GM12878 (cell line): ENCODE measurements at regions of chr6 and their contacts with region 1.

Region 1: DNA sequence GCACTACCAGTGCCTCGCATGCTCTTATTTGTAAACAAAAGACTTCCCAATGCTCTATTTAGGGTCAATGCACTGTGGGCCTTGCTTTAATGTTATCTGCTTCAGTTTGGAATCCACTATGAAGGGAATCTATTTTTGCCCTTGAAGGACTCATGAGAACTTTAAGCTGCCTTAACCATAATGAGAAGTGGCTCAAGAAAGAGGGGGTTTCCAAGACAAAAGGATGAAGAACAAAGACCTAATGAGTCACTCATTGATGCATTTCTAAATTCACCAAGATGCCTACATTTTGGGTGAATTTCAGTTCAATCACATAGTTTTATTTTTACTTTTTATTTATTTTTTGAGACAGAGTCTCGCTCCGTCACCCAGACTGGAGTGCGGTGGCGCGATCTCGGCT is 228.2 kb downstream of the LY86 start:
- DNase-seq: no peak
- ATAC-seq: peak; percentile 73
- H3K4me3 ChIP-seq: no peak overlapping the region
- H3K27ac ChIP-seq: peak overlapping the region; percentile 62
- H3K4me1 ChIP-seq: peaks cover 21% of the 10 kb centered on the region
- H3K27me3 ChIP-seq: no peaks in the 10 kb centered on the region
- CTCF ChIP-seq: no peak
- EP300 ChIP-seq: no peak
- POLR2A ChIP-seq: no peak
- RAD21 ChIP-seq: no peak

Region 2: DNA sequence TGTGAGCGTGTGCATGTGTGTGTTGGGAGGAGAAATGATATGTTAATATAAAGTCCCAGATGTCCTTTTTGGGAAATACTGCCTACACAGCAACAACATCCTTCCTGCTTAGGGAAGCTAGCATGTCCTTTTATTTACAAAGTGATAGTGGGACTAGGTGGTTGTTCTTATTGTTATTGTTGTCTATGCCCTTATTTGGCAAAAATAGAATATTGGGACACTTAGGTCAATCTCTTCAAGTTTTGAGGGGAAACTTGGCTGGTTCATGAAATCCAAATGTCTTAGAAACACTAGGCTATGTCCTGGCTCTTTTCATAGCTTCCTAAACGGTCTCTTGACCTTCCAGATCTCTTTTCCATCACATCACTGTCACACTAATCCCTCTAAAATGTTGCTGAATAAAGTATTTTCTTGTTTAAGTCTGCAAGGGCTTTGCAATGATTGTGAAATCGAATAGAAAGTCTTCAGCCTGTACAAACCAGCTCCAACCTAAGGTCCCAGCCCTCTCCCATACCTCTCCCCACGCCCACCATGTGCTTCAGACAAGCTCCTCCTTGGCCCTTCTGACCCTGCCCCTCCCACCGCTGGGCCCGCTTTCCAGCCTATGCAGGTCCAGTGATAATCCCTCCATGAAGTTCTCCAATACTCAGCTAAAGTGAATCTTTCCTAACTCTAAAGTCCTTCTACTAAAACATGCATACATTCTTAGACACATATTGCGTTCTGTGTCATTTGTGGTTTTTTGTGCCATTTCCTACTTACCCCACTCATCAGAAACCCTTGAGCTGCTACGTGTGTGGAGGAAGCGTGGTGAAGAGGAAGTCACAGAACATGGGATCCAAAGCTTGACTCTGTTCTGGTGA is 23.1 kb before region 1 on chr6:
- CTCF ChIA-PET with region 1: interaction called, 3 read pairs
- POLR2A ChIA-PET with region 1: interaction called, 9 read pairs
- RAD21 ChIA-PET with region 1: interaction called, 13 read pairs
- SMC1A ChIA-PET with region 1: interaction called, 31 read pairs
- in situ Hi-C with region 1: no loop called
- intact Hi-C with region 1: loop called (anchors 2 kb)
- DNase-seq: no peak
- ATAC-seq: no peak
- H3K4me3 ChIP-seq: no peak overlapping the region
- H3K27ac ChIP-seq: no peak overlapping the region
- H3K4me1 ChIP-seq: peaks cover 28% of the 10 kb centered on the region
- H3K27me3 ChIP-seq: no peaks in the 10 kb centered on the region
- CTCF ChIP-seq: no peak
- EP300 ChIP-seq: no peak
- POLR2A ChIP-seq: no peak
- RAD21 ChIP-seq: no peak

Region 3: DNA sequence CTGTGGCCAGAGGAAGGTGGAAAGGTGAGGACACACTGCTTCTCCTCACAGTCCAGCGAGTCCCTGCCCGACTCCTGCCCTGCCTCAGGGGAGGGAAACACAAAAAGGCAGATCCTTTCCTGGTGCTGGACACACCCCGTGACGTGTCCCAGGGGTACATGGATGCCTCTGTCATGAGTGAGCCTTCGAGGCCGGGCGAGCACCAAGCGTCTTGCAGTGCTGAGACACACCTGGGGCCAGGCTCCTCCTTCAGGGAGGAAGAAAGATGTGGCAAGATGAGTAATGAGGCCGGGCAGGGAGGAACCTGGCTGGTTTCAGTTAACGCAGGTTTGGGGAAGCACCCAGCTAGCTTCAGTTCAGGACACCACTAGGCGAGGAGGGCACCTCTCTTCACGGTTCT is 13.1 kb before region 1 on chr6:
- CTCF ChIA-PET with region 1: interaction called, 16 read pairs
- POLR2A ChIA-PET with region 1: interaction called, 15 read pairs
- RAD21 ChIA-PET with region 1: interaction called, 29 read pairs
- SMC1A ChIA-PET with region 1: interaction called, 31 read pairs
- in situ Hi-C with region 1: no loop called
- intact Hi-C with region 1: loop called (anchors 2 kb)
- DNase-seq: no peak
- ATAC-seq: peak; percentile 77
- H3K4me3 ChIP-seq: no peak overlapping the region
- H3K27ac ChIP-seq: no peak overlapping the region
- H3K4me1 ChIP-seq: peaks cover 60% of the 10 kb centered on the region
- H3K27me3 ChIP-seq: no peaks in the 10 kb centered on the region
- CTCF ChIP-seq: no peak
- EP300 ChIP-seq: no peak
- POLR2A ChIP-seq: no peak
- RAD21 ChIP-seq: no peak

Region 4: DNA sequence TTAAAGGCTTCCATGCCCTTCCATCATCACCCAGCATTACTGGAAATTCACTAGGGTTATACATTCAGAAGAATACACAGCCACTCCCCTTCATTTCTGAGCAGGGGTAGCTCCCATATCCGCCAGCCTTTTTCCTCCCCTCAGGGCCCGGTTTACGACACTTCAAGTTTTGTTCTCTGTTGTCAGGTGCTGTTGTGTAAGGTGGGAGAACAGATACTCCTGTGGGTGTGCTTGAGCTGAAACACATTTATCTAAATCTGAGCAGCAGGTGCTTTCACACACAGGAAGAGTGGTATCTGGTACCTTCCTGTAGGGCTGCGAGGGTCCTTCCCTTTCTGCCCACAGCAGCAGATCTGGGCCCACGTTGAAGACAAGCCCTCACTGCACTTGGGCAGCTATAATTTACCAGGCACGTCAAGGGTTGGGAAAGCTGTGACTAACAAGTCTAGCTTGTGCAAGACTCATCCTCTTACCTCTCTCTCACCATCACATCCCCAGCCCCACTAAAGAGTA is 75.3 kb after region 1 on chr6:
- CTCF ChIA-PET with region 1: no interaction called
- POLR2A ChIA-PET with region 1: no interaction called
- RAD21 ChIA-PET with region 1: no interaction called
- SMC1A ChIA-PET with region 1: no interaction called
- in situ Hi-C with region 1: no loop called
- intact Hi-C with region 1: no loop called
- DNase-seq: no peak
- ATAC-seq: no peak; the same call in 2 of the 3 replicates
- H3K4me3 ChIP-seq: no peak overlapping the region
- H3K27ac ChIP-seq: no peak overlapping the region
- H3K4me1 ChIP-seq: no peaks in the 10 kb centered on the region
- H3K27me3 ChIP-seq: peaks cover 0 to under 1% of the 10 kb centered on the region in 2 experiments; a peak in 1 of 4 replicates
- CTCF ChIP-seq: no peak
- EP300 ChIP-seq: no peak
- POLR2A ChIP-seq: no peak
- RAD21 ChIP-seq: no peak